K562 (cell line): ENCODE measurements at regions of chr6 and their contacts with region 1.

Region 1: GRCh38 chr6:28531479-28532128 is 5.9 kb downstream of the GPX5 start:
- DNase-seq: peak in 2 of 4 experiments; percentile 58 to 67
- ATAC-seq: peak; percentile 84
- H3K4me3 ChIP-seq: no peak overlapping the region
- H3K27ac ChIP-seq: no peak overlapping the region
- H3K4me1 ChIP-seq: peaks cover 4 to 14% of the 10 kb centered on the region in 2 experiments; a peak in 4 of 5 replicates
- H3K27me3 ChIP-seq: no peaks in the 10 kb centered on the region
- CTCF ChIP-seq: peak; percentile 60 to 80 (median 75)
- EP300 ChIP-seq: no peak
- POLR2A ChIP-seq: no peak
- RAD21 ChIP-seq: peak; percentile 76 to 91

Region 2: GRCh38 chr6:28506807-28507475 is 24.7 kb before region 1 on chr6:
- CTCF ChIA-PET with region 1: no interaction called
- POLR2A ChIA-PET with region 1: no interaction called
- in situ Hi-C with region 1: no loop called
- intact Hi-C with region 1: no loop called
- DNase-seq: no peak
- ATAC-seq: no peak
- H3K4me3 ChIP-seq: no peak overlapping the region
- H3K27ac ChIP-seq: no peak overlapping the region
- H3K4me1 ChIP-seq: peaks cover 15 to 21% of the 10 kb centered on the region in 2 experiments
- H3K27me3 ChIP-seq: no peaks in the 10 kb centered on the region
- CTCF ChIP-seq: no peak
- EP300 ChIP-seq: no peak
- POLR2A ChIP-seq: no peak
- RAD21 ChIP-seq: no peak

Region 3: GRCh38 chr6:28586962-28587745 is 55.5 kb after region 1 on chr6:
- CTCF ChIA-PET with region 1: no interaction called
- POLR2A ChIA-PET with region 1: no interaction called
- in situ Hi-C with region 1: no loop called
- intact Hi-C with region 1: loop called (anchors 1 kb)
- DNase-seq: no peak
- ATAC-seq: no peak
- H3K4me3 ChIP-seq: no peak overlapping the region
- H3K27ac ChIP-seq: no peak overlapping the region
- H3K4me1 ChIP-seq: peaks cover 0 to 5% of the 10 kb centered on the region in 2 experiments
- H3K27me3 ChIP-seq: no peaks in the 10 kb centered on the region
- CTCF ChIP-seq: no peak
- EP300 ChIP-seq: no peak
- POLR2A ChIP-seq: no peak
- RAD21 ChIP-seq: no peak